ENCODE measurements at regions of chr11 and their contacts with region 1.

Region 1: GRCh38 chr11:9757809-9758636 is 94.1 kb downstream of the SWAP70 start:
- DNase-seq: peak; percentile 94 to 96
- ATAC-seq: peak; percentile 85
- H3K4me3 ChIP-seq: peak overlapping the region; percentile 17 to 31
- H3K27ac ChIP-seq: peak overlapping the region; percentile 44 to 56
- H3K4me1 ChIP-seq: no peaks in the 10 kb centered on the region
- H3K27me3 ChIP-seq: no peaks in the 10 kb centered on the region

Region 2: GRCh38 chr11:9663699-9664275 is 94.2 kb before region 1 on chr11 and contains the start of gene SWAP70:
- intact Hi-C with region 1: loop called in 1 of 2 experiments (anchors 5 kb)
- DNase-seq: peak; percentile 95 to 97
- ATAC-seq: peak; percentile 97
- H3K4me3 ChIP-seq: peak within 1 kb of the TSS; percentile 83 to 92
- H3K27ac ChIP-seq: peak within 1 kb of the TSS; percentile 2 to 93
- H3K4me1 ChIP-seq: no peaks in the 10 kb centered on the region
- H3K27me3 ChIP-seq: no peaks in the 10 kb centered on the region
- total RNA-seq, gene SWAP70: 64.4 to 69.0 TPM

Region 3: DNA sequence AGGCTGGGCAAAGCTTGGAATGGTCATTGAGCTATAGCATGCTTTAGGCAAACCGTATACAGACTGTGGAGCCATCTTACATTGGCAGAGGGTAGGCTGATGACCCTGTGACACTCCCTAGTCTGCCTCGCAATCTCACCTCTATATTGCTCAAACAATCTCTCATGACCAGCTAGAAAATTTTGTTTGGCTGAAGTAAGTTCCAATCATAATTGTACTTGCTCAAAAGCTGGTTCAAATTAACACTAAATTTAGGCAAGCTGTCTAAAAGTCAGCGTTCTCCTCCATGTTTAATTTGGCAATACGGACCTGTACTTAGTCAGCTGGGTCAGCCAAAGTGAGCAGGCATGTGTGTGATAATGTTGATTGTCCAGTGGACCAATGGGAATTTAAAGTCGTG is 38.8 kb after region 1 on chr11:
- intact Hi-C with region 1: loop called in 1 of 2 experiments (anchors 5 kb)
- DNase-seq: no peak
- ATAC-seq: peak; percentile 71
- H3K4me3 ChIP-seq: no peak overlapping the region
- H3K27ac ChIP-seq: peak overlapping the region in 1 of 2 donors; percentile 48
- H3K4me1 ChIP-seq: peaks cover 3 to 12% of the 10 kb centered on the region in 2 donors
- H3K27me3 ChIP-seq: no peaks in the 10 kb centered on the region

Region 4: DNA sequence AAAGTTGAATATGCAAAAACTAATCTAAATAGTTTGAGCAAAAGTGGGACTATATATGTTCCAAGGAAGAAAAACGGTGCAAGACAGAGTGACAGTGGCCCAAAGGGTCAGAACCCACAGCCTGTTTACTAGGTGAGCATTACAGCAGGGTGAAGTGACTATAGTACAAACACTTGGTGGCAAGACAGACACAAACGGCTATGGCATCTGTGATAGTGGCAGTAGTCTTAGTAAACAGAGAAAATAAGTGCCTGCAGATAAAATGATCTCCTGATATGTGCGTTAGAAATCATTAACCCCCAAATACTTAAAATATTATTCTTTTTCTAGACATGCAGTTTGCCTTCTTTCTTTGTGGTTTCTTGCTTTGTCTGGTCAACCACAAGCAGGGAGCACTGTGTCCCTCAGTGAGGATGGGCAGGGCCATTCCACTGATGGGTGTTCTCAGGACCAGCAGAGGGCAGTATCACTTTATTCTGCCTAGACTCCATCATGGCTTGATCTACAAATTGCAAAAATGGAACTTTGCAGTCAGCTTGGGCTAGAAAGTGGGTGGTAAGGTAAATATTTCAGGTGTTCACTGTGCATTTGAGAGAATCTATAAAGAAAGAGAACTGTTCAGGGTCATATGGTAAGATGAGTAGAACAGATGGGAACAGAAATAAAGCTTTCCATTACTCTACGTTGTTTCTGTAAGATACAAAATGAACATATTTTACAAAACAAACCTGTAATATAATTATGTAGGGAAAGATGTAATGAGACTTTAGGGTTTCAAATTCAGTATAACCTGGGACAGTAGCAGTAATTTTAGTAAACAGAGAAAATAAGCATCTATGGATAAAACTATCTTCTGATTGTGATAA is 104.1 kb after region 1 on chr11:
- intact Hi-C with region 1: loop called in 1 of 2 experiments (anchors 10 kb)
- DNase-seq: no peak
- ATAC-seq: peak; percentile 86
- H3K4me3 ChIP-seq: no peak overlapping the region
- H3K27ac ChIP-seq: no peak overlapping the region
- H3K4me1 ChIP-seq: no peaks in the 10 kb centered on the region
- H3K27me3 ChIP-seq: no peaks in the 10 kb centered on the region

Region 5: GRCh38 chr11:9972989-9973388 is 215.0 kb after region 1 on chr11:
- intact Hi-C with region 1: loop called (anchors 1 to 5 kb)
- DNase-seq: no peak
- ATAC-seq: no peak
- H3K4me3 ChIP-seq: no peak overlapping the region
- H3K27ac ChIP-seq: no peak overlapping the region
- H3K4me1 ChIP-seq: peaks cover 0 to 2% of the 10 kb centered on the region in 2 donors
- H3K27me3 ChIP-seq: no peaks in the 10 kb centered on the region

Region 6: DNA sequence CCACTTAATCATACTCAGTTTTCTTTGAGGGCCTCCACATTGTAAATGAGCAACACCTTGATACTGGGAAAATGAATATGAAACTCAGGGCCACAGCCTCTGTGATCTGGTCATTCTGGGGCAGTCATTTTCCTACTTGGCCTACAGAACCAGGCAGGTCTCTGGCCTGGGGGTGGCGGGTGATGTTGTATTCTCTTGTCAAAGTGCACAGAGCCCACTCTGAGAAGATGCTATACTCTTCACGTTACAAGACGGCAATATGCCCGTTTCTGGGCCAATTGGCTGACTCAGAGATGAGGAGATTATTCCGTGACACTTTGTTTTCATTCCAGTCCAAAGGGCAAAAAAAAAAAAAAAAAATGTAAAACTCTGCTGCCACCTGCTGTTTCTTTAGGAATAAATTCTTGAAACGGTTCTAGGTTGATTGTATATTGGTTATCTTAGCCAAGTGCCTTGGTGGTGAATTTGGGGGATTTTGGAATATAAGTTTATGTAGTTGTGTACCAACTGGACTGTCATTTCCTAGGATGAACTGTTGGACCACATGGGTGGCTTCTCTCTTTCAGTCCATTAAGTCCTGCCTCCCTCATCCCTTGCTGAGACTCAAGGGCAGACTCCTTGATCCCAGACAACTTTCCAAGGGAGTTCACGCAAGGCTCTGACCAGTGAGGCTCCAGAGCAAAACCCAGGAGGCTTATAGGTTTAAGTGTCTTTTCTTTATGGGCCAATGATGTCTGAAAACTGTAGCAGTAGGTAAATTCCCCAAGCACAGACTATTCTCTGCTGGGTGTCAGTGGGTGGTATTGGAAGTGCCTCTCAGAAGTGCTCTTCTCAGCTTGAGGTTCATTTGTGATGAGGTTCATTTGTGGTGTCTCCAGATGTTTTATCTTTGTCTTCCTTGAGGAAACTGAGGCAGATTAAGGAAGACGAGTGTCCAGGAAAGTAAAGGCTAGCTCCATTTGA is 565.1 kb after region 1 on chr11:
- intact Hi-C with region 1: loop called (anchors 5 kb)
- DNase-seq: peak in 1 of 2 donors; percentile 72
- ATAC-seq: peak; percentile 82
- H3K4me3 ChIP-seq: no peak overlapping the region
- H3K27ac ChIP-seq: peak overlapping the region; percentile 86 to 96
- H3K4me1 ChIP-seq: peaks cover 6 to 7% of the 10 kb centered on the region in 2 donors
- H3K27me3 ChIP-seq: no peaks in the 10 kb centered on the region

Region 7: GRCh38 chr11:10328314-10329090 is 570.5 kb after region 1 on chr11:
- intact Hi-C with region 1: loop called (anchors 5 kb)
- DNase-seq: no peak
- ATAC-seq: peak; percentile 77
- H3K4me3 ChIP-seq: no peak overlapping the region
- H3K27ac ChIP-seq: no peak overlapping the region
- H3K4me1 ChIP-seq: peaks cover 5 to 7% of the 10 kb centered on the region in 2 donors
- H3K27me3 ChIP-seq: no peaks in the 10 kb centered on the region

Measured in aorta (tissue), 5 donors.